ENCODE measurements at regions of chr6 and their contacts with region 1.

Region 1: GRCh38 chr6:110357664-110358552 is at the start of gene METTL24:
- DNase-seq: peak in 1 of 10 donors; percentile 19
- H3K4me3 ChIP-seq: peak within 1 kb of the TSS; percentile 25 to 75 (median 61)
- H3K27ac ChIP-seq: peak within 1 kb of the TSS in 58 of 59 donors; percentile 47 to 98 (median 92)
- H3K27me3 ChIP-seq: peaks cover 0 to 11% (median 0%) of the 10 kb centered on the region in 45 donors
- CTCF ChIP-seq: no peak
- total RNA-seq, gene METTL24: 2.2 to 10.3 (median 4.6) TPM

Region 2: DNA sequence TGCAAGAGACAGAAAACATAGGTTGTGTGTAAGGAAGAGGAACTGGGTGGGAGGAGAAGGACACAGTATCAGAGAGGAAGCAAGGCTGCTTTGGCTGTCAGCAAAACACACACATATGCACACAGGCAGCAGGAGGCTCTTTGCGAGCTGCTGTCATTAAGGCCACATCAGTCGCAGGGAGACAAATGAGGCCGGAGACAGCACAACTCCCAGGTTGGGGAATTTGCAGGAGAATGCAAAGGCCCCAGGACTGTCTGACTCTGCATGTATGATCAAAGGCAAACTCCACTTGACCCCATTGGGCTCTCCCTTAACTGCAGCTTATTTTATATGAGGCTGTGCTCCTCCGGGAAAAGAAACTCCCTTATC is 35.0 kb before region 1 on chr6:
- intact Hi-C with region 1: loop called in 1 of 2 experiments (anchors 5 kb)
- DNase-seq: no peak
- H3K4me3 ChIP-seq: no peak overlapping the region
- H3K27ac ChIP-seq: peak overlapping the region in 57 of 59 donors; percentile 3 to 92 (median 76)
- H3K27me3 ChIP-seq: no peaks in the 10 kb centered on the region
- CTCF ChIP-seq: no peak

Region 3: GRCh38 chr6:110708295-110708950 is 350.5 kb after region 1 on chr6:
- intact Hi-C with region 1: no loop called
- DNase-seq: no peak
- H3K4me3 ChIP-seq: no peak overlapping the region
- H3K27ac ChIP-seq: peak overlapping the region in 32 of 59 donors; percentile 0 to 72 (median 30)
- H3K27me3 ChIP-seq: no peaks in the 10 kb centered on the region
- CTCF ChIP-seq: no peak